ENCODE measurements at regions of chr11 and their contacts with region 1.

Region 1: DNA sequence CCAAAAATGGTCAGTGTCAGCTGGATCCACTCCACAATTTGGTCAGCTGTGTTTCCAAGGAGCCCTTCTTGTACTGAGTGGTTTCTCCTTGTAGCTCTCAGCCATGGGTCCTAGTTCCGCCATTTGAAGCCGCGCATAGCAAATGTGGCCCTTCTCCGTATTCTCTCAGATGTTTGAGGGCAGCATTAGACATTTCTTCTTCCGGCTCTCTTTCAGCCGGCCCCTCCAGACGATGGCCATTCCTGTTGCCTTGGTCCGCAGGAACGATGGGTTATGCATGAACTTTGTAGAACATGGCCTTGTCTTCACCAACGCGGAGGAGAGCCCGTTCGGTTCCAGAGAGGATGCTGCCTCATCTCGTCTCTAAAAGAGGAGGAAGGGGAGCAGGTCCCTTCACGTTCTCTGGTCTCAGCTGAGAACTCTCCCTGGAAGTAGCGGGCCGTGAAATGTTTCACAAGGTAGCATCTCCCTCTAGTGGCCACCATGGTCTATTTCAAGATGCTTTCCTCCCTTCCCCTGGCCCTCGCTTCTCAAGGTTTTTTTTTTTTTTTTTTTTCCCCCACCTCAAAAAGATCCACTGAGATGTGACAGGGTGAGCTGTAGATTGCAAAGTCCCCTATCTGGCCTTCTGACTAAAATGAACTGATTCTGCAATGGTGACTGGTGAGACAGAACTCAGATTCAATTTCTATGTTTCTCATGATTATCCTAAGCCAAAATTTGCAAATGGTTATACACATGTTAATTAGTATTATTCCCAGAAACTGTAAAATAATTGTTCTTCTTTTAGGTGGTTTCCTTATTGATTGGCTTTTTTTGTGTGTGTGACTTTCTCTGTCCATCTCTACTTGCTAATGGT is 19.8 kb upstream of the PLET1 start:
- DNase-seq: peak; percentile 59
- H3K4me3 Mint-ChIP-seq: peak overlapping the region; percentile 66
- H3K27ac Mint-ChIP-seq: no peak overlapping the region
- H3K4me1 Mint-ChIP-seq: peaks cover 10% of the 10 kb centered on the region
- H3K27me3 Mint-ChIP-seq: no peaks in the 10 kb centered on the region
- CTCF ChIP-seq: peak; percentile 38

Region 2: DNA sequence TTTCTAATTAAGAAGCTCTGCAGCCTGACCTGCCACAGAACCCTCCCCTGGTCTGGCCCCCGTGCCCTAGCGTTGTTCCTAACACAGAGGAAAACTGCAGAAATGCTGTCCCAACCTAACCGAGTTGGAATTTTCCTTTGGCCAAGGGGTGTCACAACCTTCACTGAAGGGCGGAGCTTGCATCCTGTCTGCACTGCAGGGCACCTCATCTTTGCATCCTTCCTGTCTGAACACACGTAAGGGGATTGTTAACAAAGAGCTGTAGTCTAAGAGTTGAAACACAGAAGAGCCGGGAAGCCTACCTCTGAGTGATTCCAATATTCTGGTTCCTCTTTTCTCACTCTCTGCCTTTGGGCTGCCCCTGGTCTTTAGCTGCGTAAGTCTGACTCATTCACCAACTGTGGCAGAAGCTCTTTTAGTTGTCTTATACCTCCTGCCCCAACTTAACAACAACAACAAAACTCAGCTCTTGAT is 341.8 kb before region 1 on chr11:
- CTCF ChIA-PET with region 1: no interaction called
- intact Hi-C with region 1: loop called (anchors 10 kb)
- DNase-seq: no peak
- H3K4me3 Mint-ChIP-seq: no peak overlapping the region
- H3K27ac Mint-ChIP-seq: no peak overlapping the region
- H3K4me1 Mint-ChIP-seq: peaks cover 8% of the 10 kb centered on the region
- H3K27me3 Mint-ChIP-seq: no peaks in the 10 kb centered on the region
- CTCF ChIP-seq: no peak

Region 3: DNA sequence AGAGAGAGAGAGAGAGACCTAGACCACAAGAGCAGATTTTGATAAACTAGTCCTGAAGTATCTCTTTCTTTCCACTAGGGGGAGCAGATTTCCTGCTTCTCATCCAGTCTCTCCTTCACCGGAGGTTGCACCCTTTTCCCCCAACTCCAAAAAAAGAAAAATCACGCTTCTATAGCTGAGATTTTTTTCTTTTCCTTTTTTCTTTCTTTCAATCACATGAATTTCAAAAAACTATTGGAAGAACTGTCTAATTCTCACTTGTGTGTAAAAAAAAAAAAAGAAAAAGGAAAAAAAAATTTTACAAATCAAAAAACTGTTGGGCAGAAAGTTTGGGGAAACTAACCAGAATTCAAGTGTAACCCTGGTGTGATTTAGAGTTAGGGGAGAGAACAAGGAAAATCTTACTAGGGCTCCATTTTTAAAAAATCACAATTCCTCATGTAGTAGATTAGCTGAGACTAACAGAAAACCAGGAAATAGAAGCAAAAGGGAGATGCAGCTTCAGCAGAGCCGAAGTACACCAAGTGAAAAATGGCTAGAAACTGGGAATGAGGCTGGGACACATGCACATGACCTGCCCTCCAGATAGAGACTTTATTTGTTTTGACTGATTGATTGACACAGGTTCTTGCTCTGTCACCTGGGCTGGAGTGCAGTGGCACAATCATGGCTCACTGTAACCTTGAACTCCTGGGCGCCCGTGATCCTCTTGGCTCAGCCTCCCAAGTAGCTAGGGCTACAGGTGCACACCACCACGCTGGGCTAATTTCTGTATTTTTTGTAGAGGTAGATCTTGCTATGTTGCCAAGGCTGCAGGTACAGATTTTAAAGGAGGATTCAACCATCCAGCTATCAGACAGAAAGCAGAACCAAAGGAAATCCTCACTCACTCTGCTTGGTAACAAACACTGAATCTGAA is 166.7 kb before region 1 on chr11:
- CTCF ChIA-PET with region 1: interaction called, 5 read pairs
- intact Hi-C with region 1: loop called (anchors 5 kb)
- DNase-seq: no peak
- H3K4me3 Mint-ChIP-seq: no peak overlapping the region
- H3K27ac Mint-ChIP-seq: no peak overlapping the region
- H3K4me1 Mint-ChIP-seq: no peaks in the 10 kb centered on the region
- H3K27me3 Mint-ChIP-seq: no peaks in the 10 kb centered on the region
- CTCF ChIP-seq: peak; percentile 37

Region 4: GRCh38 chr11:112219476-112220232 is 60.8 kb before region 1 on chr11:
- CTCF ChIA-PET with region 1: interaction called, 13 read pairs
- intact Hi-C with region 1: loop called (anchors 1 kb)
- DNase-seq: peak; percentile 33
- H3K4me3 Mint-ChIP-seq: no peak overlapping the region
- H3K27ac Mint-ChIP-seq: no peak overlapping the region
- H3K4me1 Mint-ChIP-seq: peaks cover 8% of the 10 kb centered on the region
- H3K27me3 Mint-ChIP-seq: no peaks in the 10 kb centered on the region
- CTCF ChIP-seq: peak; percentile 44

Region 5: GRCh38 chr11:112265721-112266409 is 14.6 kb before region 1 on chr11:
- CTCF ChIA-PET with region 1: interaction called, 14 read pairs
- intact Hi-C with region 1: no loop called
- DNase-seq: no peak
- H3K4me3 Mint-ChIP-seq: no peak overlapping the region
- H3K27ac Mint-ChIP-seq: no peak overlapping the region
- H3K4me1 Mint-ChIP-seq: peaks cover 28% of the 10 kb centered on the region
- H3K27me3 Mint-ChIP-seq: no peaks in the 10 kb centered on the region
- CTCF ChIP-seq: no peak